ENCODE measurements at regions of chr7 and their contacts with region 1.

Region 1: DNA sequence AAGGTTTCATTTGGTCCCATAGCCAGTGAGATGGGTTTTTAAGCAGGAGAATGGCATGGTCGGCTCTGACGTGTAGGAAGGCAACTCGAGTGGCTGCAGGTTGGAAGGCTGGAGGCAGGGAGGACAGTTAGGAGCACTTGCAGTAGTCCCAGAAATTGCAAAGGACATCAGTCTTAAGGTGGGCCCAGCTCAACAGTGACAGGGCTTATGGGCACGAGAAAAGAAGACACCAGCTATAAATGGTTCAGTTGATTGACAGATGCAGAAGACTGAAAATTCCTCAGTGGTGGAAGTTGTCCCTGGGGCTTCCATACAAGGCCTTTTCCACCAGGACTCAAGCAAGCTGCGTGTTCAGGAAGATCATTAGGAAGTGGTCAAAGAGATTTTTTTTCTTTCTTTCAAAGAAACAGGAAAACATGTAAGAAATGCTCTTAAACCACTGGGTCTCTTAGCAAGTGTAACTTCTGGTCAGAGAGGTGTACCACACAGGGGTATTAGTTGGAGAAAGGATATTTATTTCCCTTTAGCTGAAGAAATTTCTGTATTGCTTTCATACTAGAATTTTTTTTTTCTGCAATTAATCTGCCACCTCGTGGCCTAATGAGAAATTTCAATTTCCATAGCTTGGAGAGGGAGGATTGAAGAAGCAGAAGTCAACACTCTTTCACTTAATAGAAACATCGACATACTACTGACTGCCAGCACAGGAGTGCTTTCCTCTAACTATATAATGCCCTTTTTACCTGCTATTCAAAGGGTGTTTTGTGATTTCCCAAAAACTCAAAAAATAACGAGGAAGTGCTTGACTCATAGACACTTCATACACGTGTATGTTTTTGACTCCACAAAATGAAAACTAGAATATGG is 177.4 kb upstream of the NAMPT start:
- DNase-seq: peak; percentile 58
- ATAC-seq: peak; percentile 72
- H3K4me3 ChIP-seq: no peak overlapping the region
- H3K27ac ChIP-seq: no peak overlapping the region
- H3K4me1 ChIP-seq: no peaks in the 10 kb centered on the region
- H3K27me3 ChIP-seq: no peaks in the 10 kb centered on the region
- CTCF ChIP-seq: peak; percentile 62; the same call in 1 of the 2 replicates

Region 2: GRCh38 chr7:106216517-106216922 is 245.7 kb before region 1 on chr7:
- CTCF ChIA-PET with region 1: no interaction called
- POLR2A ChIA-PET with region 1: interaction called, 11 read pairs
- in situ Hi-C with region 1: no loop called
- intact Hi-C with region 1: no loop called
- DNase-seq: peak; percentile 98
- ATAC-seq: peak; percentile 95
- H3K4me3 ChIP-seq: peak overlapping the region in 1 of 2 experiments; percentile 43; a peak in 3 of 4 replicates
- H3K27ac ChIP-seq: peak overlapping the region; percentile 79
- H3K4me1 ChIP-seq: peaks cover 16% of the 10 kb centered on the region
- H3K27me3 ChIP-seq: no peaks in the 10 kb centered on the region
- CTCF ChIP-seq: no peak